HEK293 (cell line): ENCODE measurements at regions of chr4 and their contacts with region 1.

Region 1: DNA sequence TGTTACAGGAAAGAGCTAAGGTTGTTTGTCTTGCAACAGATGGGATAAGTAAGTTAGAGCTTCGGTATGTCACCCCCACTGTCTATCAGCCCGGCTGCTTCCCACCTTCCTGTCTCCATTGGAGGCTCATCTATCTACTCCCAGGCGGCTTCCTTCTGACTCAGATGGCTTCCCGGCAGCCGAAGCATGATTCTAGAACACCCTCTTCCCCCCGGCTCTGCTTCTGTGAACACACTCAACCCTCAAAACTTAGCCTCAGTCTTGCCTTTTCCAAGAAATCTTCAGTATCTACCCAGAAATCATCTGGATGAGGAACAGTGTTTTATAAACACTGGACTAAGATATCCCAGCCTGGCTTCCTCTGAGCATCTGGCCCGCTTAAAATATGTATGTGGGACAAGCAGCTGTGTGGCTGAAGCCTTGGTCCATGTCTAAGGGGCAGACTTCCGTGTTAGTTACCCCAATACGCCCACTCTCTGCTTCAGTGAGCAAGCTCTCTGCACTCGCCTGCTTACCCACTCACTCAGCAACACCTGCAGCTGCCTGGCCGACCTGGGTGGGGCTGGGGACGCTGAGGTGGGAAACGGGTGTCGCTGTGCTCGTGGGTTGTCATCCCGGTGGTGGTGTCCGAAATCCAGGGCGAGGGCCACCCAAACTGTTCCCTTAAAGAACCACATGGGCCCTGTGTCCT is 12.0 kb upstream of the SLC2A9 start:
- H3K4me3 ChIP-seq: no peak overlapping the region
- H3K27ac ChIP-seq: no peak overlapping the region
- H3K4me1 ChIP-seq: no peaks in the 10 kb centered on the region; the same call in 1 of the 2 replicates
- CTCF ChIP-seq: no peak

Region 2: DNA sequence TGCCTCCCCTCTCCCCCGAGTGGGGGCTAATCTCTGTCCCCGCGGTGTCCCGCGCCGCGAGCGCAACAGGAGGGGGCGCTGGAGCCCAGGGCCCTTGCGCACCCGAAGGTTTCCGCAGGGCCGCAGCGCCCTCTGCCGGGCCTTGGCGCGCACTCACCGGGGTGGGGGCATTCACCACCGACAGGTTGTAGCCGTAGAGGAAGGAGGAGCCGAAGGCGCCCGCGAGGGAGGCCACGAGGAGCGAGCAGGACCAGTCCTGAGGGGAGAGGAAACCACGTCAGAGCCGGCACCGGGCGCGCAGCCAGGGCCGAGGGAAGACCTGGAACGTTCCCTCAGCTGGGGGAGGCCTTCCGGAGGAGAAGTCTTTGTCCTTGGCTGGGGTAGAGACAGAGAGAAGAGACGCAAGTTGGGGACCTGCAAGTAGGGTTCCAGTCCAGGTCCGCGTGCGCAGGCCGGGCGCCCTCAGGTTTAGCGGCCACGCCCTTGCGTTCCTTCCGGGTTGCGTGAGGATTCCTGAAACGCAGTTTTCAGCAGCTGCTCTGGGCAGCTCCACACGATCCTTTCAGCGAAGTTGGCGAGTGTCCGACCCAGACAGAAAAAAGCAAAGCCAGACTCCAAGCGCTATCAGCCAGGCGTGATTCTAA is 14.4 kb before region 1 on chr4:
- CTCF ChIA-PET with region 1: interaction called, 12 read pairs
- POLR2A ChIA-PET with region 1: no interaction called
- H3K4me3 ChIP-seq: peak overlapping the region; percentile 36
- H3K27ac ChIP-seq: no peak overlapping the region
- H3K4me1 ChIP-seq: no peaks in the 10 kb centered on the region
- CTCF ChIP-seq: peak; percentile 56; the same call in 1 of the 2 replicates

Region 3: DNA sequence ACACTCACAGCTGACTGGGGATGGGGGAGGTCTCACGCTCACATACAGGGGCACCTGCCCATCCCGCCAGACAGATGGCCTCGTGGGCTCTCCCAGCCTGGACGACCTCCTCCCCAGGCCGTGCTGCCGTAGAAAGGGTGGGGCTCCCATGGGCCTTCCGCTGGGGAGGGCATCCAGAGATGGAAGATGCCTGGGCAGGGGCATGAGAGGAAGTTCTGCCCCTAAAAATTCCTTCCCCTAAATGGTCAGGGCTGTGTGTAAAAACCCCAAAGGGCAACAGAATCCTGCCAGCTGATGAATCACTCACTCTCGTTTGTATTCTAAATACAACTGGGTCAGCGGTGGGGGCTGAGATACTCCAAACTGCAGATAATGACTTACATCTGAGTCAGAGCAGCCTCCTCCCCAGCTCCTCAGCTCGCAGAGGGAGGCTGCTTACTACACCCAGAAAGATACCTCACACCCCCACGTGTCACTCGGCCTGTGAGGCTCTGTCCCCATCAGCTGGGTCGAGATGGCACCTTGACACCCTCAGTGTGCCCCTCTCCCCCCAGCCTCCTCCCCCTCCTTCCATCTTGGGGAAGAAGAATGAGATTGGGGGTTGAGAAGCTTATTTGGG is 73.2 kb after region 1 on chr4:
- CTCF ChIA-PET with region 1: no interaction called
- POLR2A ChIA-PET with region 1: no interaction called
- H3K4me3 ChIP-seq: no peak overlapping the region
- H3K27ac ChIP-seq: no peak overlapping the region
- H3K4me1 ChIP-seq: no peaks in the 10 kb centered on the region
- CTCF ChIP-seq: no peak